GM23248 (cell line): ENCODE measurements at regions of chr1 and their contacts with region 1.

Region 1: DNA sequence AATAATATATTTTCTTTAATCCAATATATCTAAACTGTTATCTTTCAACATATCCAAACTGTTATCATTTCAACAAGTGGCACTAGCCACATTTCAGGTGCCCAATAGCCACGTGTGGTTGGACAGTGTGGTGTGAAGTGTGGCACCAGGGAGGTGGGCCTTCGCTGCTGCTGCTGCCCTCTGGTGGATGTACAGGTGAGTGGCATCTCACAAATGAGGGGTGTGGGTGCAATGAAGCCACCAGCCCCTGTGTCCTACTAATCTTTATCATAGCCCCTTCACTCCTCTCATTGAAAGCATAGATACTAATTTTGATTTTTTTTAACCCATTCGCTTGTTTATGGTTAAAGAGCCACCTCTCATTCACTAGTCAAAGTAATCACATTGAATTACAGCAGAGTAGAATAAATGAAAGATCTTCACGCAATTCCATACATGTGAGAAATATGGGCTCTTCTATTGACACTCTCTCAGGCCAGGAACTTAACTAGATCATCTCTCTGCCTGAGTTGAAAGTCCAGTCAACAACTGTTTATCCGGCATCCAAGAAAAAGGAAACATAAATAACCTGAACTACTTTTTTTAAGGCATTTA is 499.2 kb downstream of the OMA1 start:
- DNase-seq: peak; percentile 32
- H3K4me3 ChIP-seq: no peak overlapping the region
- H3K27ac ChIP-seq: no peak overlapping the region
- H3K4me1 ChIP-seq: no peaks in the 10 kb centered on the region
- H3K27me3 ChIP-seq: peaks cover 3% of the 10 kb centered on the region; the same call in 1 of the 2 replicates

Region 2: GRCh38 chr1:57424231-57425027 is 622.9 kb before region 1 on chr1:
- in situ Hi-C with region 1: loop called (anchors 25 kb)
- DNase-seq: peak; percentile 51
- H3K4me3 ChIP-seq: peak overlapping the region; percentile 68
- H3K27ac ChIP-seq: no peak overlapping the region
- H3K4me1 ChIP-seq: no peaks in the 10 kb centered on the region
- H3K27me3 ChIP-seq: peaks cover 64% of the 10 kb centered on the region

Region 3: GRCh38 chr1:58340185-58340584 is 292.8 kb after region 1 on chr1:
- in situ Hi-C with region 1: no loop called
- DNase-seq: no peak
- H3K4me3 ChIP-seq: no peak overlapping the region
- H3K27ac ChIP-seq: no peak overlapping the region
- H3K4me1 ChIP-seq: no peaks in the 10 kb centered on the region
- H3K27me3 ChIP-seq: no peaks in the 10 kb centered on the region

Region 4: DNA sequence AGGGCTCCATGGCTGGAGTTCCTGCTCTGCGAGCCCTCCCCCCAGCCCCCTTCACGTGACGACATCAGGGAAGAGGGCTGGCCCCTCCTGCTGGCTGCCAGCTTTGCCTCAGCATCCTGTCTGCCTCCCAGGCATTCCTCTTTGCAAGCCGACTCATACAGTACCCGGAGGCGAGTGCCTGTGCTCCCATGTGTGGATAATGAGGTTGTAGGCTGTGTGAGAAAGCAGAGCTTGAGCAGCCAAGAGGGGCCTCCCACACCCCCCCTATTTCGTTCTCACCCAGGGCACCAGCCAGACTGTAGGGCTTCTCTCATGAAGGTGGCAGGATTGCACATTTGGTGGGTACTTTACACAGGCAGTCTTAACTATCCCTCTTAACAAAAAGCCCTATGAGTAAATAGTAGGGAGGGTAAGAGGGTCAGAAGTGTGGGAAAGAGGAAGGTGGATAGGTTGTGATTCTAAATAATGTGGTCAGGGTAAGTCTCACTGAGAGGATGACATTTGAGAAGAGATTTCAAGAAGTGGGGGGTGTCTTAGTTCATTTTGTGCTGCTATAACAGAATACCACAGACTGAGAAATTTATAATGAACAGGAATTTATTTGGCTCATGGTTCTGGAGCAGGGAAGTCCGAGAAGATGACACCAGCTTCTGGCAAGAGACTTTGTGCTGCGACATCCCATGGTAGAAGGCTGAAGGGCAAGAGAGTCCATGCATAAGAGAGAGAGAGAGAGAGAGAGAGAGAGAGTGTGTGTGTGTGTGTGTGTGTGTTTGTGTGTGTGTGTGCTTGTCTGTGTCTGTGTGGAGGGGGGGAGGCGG is 385.7 kb after region 1 on chr1:
- in situ Hi-C with region 1: no loop called
- DNase-seq: peak; percentile 91
- H3K4me3 ChIP-seq: peak overlapping the region; percentile 46
- H3K27ac ChIP-seq: peak overlapping the region; percentile 91
- H3K4me1 ChIP-seq: peaks cover 34% of the 10 kb centered on the region
- H3K27me3 ChIP-seq: no peaks in the 10 kb centered on the region

Region 5: GRCh38 chr1:58874757-58875755 is 827.7 kb after region 1 on chr1:
- in situ Hi-C with region 1: no loop called
- DNase-seq: peak; percentile 85
- H3K4me3 ChIP-seq: no peak overlapping the region; the same call in 1 of the 2 replicates
- H3K27ac ChIP-seq: peak overlapping the region; percentile 77
- H3K4me1 ChIP-seq: peaks cover 25% of the 10 kb centered on the region
- H3K27me3 ChIP-seq: no peaks in the 10 kb centered on the region